Sciatic nerve (tissue), 2 donors: ENCODE measurements at regions of chr18 and their contacts with region 1.

Region 1: GRCh38 chr18:64668563-64668962 is 519.7 kb upstream of the LINC00305 start:
- DNase-seq: no peak
- ATAC-seq: no peak

Region 2: DNA sequence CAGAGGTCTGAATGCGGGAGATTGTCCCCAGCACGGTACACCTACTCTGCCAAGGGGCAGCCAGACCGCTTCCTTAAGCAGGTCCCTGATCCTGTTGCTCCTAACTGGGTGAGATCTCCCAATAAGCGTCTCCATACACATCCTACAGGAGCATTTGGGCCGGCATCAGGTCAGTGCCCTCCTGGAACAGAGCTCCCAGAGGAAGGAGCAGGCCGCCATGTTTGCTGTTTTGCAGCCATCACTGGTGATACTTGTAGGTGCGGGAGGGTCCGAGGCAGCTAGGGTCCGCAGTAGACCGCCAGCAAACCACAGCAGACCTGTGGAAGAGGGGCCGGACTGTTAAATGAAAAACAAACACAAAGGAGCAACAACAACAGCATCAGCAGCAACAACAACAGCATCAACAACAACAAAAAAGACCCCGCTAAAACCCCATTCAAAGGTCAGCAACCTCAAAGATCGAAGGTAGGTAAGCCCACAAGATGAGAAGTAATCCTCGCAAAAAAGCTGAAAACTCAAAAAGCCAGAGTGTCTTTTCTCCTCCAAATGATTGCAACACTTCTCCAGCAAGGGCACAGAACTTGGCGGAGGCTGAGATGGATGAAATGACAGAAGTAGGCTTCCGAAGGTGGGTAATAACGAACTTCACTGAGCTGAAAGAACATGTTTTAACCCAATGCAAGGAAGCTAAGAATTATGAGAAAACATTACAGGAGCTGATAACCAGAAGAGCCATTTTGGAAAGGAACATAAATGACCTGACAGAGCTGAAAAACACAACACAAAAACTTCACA is 1003.3 kb after region 1 on chr18:
- intact Hi-C with region 1: loop called (anchors 5 kb)
- DNase-seq: no peak
- ATAC-seq: no peak